A549 (cell line): ENCODE measurements at regions of chr19 and their contacts with region 1.

Region 1: DNA sequence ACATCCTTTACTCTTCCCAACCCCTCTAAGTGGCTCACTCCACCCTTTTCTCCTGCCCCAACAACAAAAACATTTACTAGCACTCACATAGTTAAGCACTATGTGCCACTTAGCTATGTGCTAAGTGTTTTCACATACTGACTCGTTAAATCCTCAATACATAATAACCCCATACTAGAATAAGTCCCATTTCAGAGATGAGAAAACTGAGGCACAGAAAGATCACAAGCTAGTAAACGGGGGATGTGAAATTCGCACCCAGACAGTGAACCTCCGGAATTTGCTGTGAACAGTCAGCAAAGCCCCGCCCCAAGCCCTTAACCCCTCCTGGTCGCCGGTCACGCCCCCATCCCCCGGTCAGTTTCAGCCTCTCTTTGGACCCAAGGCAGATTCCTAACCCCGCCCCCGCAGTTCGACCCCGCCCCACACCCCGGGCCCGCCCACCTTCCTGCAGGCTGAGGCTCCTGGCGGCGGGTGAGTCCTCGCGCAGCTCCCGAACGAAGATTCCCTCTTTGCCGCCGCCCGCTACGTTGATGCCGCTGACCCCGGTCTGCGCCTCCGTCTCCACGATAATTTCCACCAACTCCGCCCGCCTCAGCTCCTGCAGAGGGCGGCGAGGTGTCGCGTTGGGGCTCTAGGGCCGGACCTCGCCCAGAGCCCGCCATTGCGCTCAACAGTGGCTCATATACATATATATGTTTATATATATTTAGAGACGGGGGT is 9.8 kb downstream of the PRX start:
- DNase-seq: peak; percentile 98 to 100
- ATAC-seq: peak; percentile 83 to 92
- H3K4me3 ChIP-seq: peak overlapping the region; percentile 61
- H3K27ac ChIP-seq: peak overlapping the region; percentile 66 to 84
- H3K4me1 ChIP-seq: peaks cover 10% of the 10 kb centered on the region
- CTCF ChIP-seq: no peak
- EP300 ChIP-seq: no peak
- POLR2A ChIP-seq: peak; percentile 57
- RAD21 ChIP-seq: no peak

Region 2: DNA sequence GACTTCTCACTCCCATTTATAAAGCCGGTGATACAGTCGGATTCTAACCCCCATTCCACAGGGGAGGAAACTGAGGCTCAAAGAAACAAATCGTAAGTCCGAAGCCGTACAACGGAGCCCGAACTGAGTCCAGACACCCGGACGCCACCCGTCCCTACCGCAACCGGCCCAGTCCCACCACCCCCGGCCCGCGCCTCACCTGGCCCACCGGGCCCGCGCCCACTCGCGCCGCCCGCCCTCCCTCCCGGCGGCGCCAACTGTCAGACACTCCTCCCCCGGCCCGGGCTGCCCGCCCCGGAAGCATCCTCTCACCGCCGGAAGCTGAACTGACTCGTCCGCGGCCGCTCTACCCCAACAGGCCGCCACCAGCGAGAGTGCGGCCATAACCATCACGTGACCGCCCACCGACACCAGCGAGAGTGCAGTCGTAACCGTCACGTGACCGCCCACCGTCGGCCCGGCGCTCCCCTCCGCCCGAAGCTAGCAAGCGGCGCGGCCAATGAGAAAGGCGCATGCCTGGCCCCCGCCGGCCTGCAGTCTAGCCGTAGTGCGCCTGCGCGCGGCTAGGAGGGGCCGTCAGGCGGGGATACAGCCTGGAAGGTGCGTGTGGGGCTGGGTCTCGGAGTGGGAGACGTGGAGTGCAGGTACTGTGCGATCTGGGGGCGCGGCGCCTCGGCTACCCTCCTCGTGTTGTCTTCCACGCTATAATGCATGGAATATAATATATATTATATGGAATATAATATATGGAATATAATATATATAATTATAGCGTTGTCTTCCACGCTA is 55.1 kb before region 1 on chr19 and contains the starts of genes C19orf47 and PLD3:
- CTCF ChIA-PET with region 1: no interaction called
- POLR2A ChIA-PET with region 1: interaction called, 12 read pairs
- DNase-seq: peak; percentile 100
- ATAC-seq: peak; percentile 98 to 99
- H3K4me3 ChIP-seq: peak within 1 kb of the TSS; percentile 80
- H3K27ac ChIP-seq: peak within 1 kb of the TSS; percentile 83 to 84
- H3K4me1 ChIP-seq: peaks cover 8% of the 10 kb centered on the region
- CTCF ChIP-seq: no peak
- EP300 ChIP-seq: no peak; a peak in 1 of 5 replicates
- POLR2A ChIP-seq: peak; percentile 99
- RAD21 ChIP-seq: no peak
- polyA plus RNA-seq, gene C19orf47: 32.8 and 39.8 TPM in 2 replicates
- polyA plus RNA-seq, gene PLD3: 290 and 350 TPM in 2 replicates

Region 3: GRCh38 chr19:40358773-40359172 is 44.6 kb before region 1 on chr19:
- CTCF ChIA-PET with region 1: no interaction called
- POLR2A ChIA-PET with region 1: no interaction called
- DNase-seq: no peak
- ATAC-seq: no peak
- H3K4me3 ChIP-seq: no peak overlapping the region
- H3K27ac ChIP-seq: no peak overlapping the region
- H3K4me1 ChIP-seq: no peaks in the 10 kb centered on the region
- CTCF ChIP-seq: no peak
- EP300 ChIP-seq: no peak
- POLR2A ChIP-seq: no peak
- RAD21 ChIP-seq: no peak

Region 4: DNA sequence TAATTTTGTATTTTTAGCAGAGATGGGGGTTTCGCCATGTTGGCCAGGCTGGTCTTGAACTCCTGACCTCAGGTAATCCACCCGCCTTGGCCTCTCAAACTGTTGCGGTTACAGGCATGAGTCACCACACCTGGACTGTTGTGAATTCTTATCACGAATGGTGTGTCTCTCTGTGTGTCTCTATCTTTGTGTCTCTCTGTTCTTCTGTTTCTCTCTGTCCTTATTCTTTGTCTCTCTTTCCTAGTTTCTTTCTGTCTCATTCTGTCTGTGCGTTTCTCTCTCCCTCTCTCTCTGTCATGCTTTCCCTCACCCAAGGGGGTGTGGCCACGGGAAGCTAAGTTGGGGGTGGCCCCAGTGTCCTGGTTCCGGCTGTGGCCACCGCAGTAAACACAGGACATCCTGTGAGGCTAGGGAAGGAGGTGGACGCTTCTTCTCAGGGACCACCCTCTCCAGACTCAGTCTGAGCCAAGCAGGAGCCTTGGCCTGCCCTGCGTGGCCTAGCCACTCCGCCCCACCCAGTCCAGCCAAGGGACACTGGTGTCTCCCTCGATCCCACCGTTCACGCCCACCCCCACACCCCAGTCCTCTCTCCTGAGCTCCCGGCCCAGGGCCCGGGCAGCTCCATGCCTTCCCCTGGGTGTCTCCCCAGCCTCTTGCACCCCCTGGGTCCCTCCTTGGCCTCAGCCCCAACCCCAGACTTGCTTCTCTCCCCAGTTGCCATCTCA is 13.7 kb after region 1 on chr19:
- CTCF ChIA-PET with region 1: interaction called, 240 read pairs
- POLR2A ChIA-PET with region 1: interaction called, 27 read pairs
- DNase-seq: peak in 1 of 2 experiments; percentile 71
- ATAC-seq: peak in 1 of 2 experiments; percentile 0; a peak in 1 of 6 replicates
- H3K4me3 ChIP-seq: no peak overlapping the region
- H3K27ac ChIP-seq: peak overlapping the region; percentile 37 to 75
- H3K4me1 ChIP-seq: peaks cover 17% of the 10 kb centered on the region
- CTCF ChIP-seq: no peak
- EP300 ChIP-seq: no peak
- POLR2A ChIP-seq: no peak
- RAD21 ChIP-seq: no peak

Region 5: DNA sequence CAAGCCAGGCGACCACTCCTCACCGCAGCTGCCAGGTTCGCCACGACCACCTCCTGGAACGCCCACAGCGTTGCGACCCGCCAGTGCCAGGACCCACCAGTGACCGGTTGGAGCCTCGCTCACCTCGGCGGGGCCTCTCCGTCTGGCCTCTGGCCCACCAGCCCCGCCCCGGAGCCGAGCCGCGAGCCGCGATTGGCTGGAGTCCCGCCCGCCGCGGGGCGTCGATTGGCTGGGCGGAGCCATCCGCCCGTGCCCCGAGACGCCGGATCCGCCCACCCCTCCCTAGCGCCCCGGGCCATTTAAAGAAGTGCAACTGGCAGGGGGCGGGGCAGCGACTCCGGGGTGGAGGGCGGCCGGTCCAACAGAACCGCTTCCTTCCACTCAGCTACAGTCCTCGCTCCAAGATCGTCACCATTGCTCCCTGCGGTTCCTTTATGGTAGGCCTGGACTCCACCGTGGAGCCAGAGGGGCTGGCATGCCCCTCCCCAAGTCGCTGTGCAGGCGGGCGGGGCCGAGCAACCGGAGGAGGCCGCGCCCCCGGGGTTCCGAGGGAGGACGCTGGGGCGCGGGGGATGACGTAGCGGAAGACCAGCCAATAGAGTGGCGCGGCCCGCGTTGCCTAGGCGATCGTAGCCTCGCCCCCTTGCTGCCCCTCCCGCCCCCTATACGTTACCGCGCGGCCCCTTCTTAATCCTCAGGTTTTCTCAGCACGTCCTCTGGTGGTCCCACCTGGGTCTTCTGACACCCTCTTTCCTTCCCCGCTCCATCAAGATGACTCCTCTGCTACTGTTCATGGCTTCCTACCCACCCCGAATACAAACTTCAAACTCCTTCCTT is 41.0 kb after region 1 on chr19 and contains the start of gene SERTAD3:
- CTCF ChIA-PET with region 1: interaction called, 14 read pairs
- POLR2A ChIA-PET with region 1: interaction called, 12 read pairs
- DNase-seq: peak; percentile 99 to 100
- ATAC-seq: peak; percentile 74 to 84
- H3K4me3 ChIP-seq: peak within 1 kb of the TSS; percentile 80
- H3K27ac ChIP-seq: peak within 1 kb of the TSS; percentile 88 to 97
- H3K4me1 ChIP-seq: peaks cover 23% of the 10 kb centered on the region
- CTCF ChIP-seq: peak; percentile 58
- EP300 ChIP-seq: no peak
- POLR2A ChIP-seq: peak; percentile 97
- RAD21 ChIP-seq: peak; percentile 70 to 74
- polyA plus RNA-seq, gene SERTAD3: 40.2 and 41.7 TPM in 2 replicates